MCF 10A (cell line): ENCODE measurements at regions of chr12 and their contacts with region 1.

Region 1: DNA sequence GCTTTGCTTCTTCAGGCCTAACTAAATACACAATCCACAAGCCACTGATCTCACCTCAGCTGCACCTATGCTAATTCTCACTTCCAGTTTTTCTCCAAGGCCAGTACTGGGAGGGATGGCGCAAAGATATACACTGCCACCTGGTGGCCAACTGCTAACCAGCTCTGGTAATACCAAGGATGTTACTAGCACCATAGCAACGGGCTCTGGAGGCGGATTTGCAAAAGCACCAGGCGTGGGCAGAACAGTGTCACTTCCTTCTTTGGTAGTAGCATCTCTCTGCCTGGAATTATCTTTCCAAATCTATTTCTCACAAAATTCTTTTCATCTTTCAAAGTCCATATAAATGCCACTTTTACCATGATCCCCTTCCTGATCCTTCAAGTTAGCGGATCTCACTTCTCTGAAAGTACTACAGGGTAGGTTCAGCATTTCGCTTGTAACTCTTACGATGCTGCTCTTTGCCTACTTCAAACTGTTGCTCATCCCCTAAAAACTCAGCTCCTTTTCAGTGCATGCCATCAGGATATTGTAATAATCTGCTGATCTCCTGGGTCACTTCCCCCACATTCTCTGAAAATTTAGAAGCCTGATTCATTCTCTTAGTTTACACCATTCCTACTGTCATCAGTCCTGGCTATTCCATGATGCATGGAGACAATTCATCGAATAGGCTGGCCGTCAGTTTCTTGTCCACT is 37.1 kb upstream of the FOXJ2 start:
- DNase-seq: peak; percentile 77
- H3K4me3 Mint-ChIP-seq: no peak overlapping the region
- H3K27ac Mint-ChIP-seq: no peak overlapping the region
- H3K4me1 Mint-ChIP-seq: no peaks in the 10 kb centered on the region
- H3K27me3 Mint-ChIP-seq: no peaks in the 10 kb centered on the region
- CTCF ChIP-seq: peak; percentile 69

Region 2: DNA sequence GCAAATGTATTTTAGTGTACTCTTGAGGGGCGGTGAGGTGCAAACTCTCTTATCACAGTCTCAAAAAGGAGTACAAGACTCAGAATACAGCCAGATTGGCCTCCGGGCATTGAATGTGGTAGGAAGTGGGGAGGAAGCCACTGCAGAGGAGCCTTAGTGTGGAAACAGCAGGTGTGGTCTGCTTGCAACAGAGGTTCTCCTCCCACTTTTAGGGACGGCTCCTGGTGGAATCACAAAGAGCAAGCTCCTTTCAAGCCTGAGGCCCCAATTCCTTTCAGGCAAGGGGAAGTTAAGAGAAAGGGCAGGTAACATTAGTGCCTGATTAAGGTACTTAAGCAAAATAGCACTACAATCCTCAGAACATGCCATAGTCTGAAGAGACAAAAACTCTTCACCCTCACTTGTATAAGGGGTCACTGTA is 35.7 kb before region 1 on chr12:
- CTCF ChIA-PET with region 1: interaction called, 23 read pairs
- POLR2A ChIA-PET with region 1: interaction called, 4 read pairs
- intact Hi-C with region 1: no loop called
- DNase-seq: peak; percentile 96
- H3K4me3 Mint-ChIP-seq: peak overlapping the region; percentile 60
- H3K27ac Mint-ChIP-seq: peak overlapping the region; percentile 92
- H3K4me1 Mint-ChIP-seq: peaks cover 27% of the 10 kb centered on the region
- H3K27me3 Mint-ChIP-seq: no peaks in the 10 kb centered on the region
- CTCF ChIP-seq: no peak

Region 3: DNA sequence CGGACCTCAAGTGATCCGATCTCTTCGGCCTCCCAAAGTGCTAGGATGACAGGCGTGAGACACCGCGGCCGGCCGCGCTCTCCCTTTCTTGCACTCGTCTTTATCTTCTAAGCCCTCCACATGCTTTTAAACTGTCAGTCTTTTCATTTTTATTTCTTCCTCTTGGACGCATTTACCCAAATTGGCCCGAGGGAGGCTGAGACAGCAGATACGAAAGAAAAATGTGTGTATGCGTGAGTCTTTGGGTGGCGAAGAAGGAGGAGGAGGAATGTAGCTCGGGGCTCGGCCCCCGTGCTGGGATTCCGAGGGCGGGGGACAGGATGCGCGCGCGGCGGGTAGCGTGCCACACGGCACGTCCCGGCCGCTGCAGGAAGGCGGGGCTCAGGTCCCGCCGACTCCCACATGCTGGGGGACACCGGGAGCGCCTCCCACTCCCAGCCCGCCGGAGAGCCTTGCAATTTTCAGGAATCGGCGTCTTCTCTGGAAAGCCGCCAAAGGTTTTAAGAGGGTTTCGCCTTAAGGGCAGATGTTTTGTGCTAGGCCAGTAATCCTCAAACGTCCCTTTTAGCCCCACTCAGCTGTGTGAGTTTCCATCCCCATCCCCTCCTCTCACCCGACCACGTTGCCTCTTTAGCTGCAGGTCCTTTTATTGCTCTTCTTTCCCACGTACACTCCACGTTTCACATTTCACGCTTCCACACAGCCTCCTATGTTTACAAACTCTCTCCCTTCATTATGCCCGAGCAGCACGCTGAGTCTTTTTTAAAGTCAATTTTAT is 24.8 kb before region 1 on chr12:
- CTCF ChIA-PET with region 1: interaction called, 11 read pairs
- POLR2A ChIA-PET with region 1: no interaction called
- intact Hi-C with region 1: no loop called
- DNase-seq: peak; percentile 87
- H3K4me3 Mint-ChIP-seq: peak overlapping the region; percentile 84
- H3K27ac Mint-ChIP-seq: peak overlapping the region; percentile 1
- H3K4me1 Mint-ChIP-seq: peaks cover 21% of the 10 kb centered on the region
- H3K27me3 Mint-ChIP-seq: no peaks in the 10 kb centered on the region
- CTCF ChIP-seq: no peak

Region 4: GRCh38 chr12:8658346-8658745 is 662.9 kb after region 1 on chr12:
- CTCF ChIA-PET with region 1: no interaction called
- POLR2A ChIA-PET with region 1: no interaction called
- intact Hi-C with region 1: no loop called
- DNase-seq: no peak
- H3K4me3 Mint-ChIP-seq: no peak overlapping the region
- H3K27ac Mint-ChIP-seq: no peak overlapping the region
- H3K4me1 Mint-ChIP-seq: no peaks in the 10 kb centered on the region
- H3K27me3 Mint-ChIP-seq: no peaks in the 10 kb centered on the region
- CTCF ChIP-seq: no peak